Caco-2 (cell line): ENCODE measurements at regions of chr1 and their contacts with region 1.

Region 1: GRCh38 chr1:247295274-247295684 is 36.4 kb downstream of the ZNF496 start:
- DNase-seq: no peak
- H3K4me3 ChIP-seq: no peak overlapping the region
- H3K4me3 Mint-ChIP-seq: no peak overlapping the region
- H3K27ac Mint-ChIP-seq: no peak overlapping the region
- H3K4me1 ChIP-seq: no peaks in the 10 kb centered on the region
- H3K4me1 Mint-ChIP-seq: no peaks in the 10 kb centered on the region
- H3K27me3 ChIP-seq: no peaks in the 10 kb centered on the region
- H3K27me3 Mint-ChIP-seq: no peaks in the 10 kb centered on the region
- CTCF ChIP-seq: no peak

Region 2: DNA sequence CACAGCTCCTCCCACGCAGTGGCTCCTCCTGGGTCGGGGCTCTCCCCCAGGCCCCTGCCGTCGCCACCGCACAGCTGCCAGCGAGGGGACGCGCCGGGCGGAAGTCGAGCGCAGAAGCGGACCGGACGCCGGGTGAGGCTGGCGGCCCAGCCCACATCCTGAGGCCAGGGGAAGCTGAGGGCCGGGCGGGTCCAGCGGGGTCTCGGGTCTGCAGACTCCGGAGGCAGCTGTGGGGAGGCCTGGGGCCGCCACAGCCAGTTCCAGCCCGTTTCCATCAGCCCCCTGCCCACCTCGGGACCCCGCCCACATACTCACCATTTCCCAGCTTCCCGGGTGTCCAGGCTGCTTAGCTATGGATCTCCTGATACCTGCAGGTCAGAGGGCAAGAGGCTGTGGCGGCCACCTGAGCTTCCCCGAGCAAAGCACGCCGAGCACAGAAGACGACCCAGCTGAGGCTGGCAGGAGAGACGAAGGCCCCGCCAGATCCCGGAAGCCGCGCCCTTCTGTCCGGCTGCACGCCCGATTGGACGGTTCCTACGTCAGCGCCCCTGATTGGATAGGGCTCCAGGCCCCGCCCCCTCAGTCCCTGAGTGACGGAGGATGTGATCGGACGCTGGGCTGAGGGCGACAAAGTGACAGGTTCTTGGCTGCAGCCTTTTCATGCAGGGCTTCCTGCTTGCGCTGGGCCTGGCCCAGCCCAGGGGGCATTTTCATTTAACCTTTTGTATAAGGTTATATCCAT is 84.7 kb before region 1 on chr1:
- CTCF ChIA-PET with region 1: no interaction called
- POLR2A ChIA-PET with region 1: no interaction called
- intact Hi-C with region 1: loop called (anchors 5 kb)
- DNase-seq: peak; percentile 97 to 98
- H3K4me3 ChIP-seq: peak overlapping the region; percentile 82
- H3K4me3 Mint-ChIP-seq: peak overlapping the region; percentile 94
- H3K27ac Mint-ChIP-seq: peak overlapping the region; percentile 95
- H3K4me1 ChIP-seq: peaks cover 7% of the 10 kb centered on the region; the same call in 1 of the 2 replicates
- H3K4me1 Mint-ChIP-seq: peaks cover 5% of the 10 kb centered on the region
- H3K27me3 ChIP-seq: no peaks in the 10 kb centered on the region
- H3K27me3 Mint-ChIP-seq: no peaks in the 10 kb centered on the region
- CTCF ChIP-seq: no peak

Region 3: GRCh38 chr1:247241687-247242086 is 53.6 kb before region 1 on chr1:
- CTCF ChIA-PET with region 1: no interaction called
- POLR2A ChIA-PET with region 1: no interaction called
- intact Hi-C with region 1: no loop called
- DNase-seq: no peak
- H3K4me3 ChIP-seq: no peak overlapping the region
- H3K4me3 Mint-ChIP-seq: no peak overlapping the region
- H3K27ac Mint-ChIP-seq: no peak overlapping the region
- H3K4me1 ChIP-seq: no peaks in the 10 kb centered on the region
- H3K4me1 Mint-ChIP-seq: no peaks in the 10 kb centered on the region
- H3K27me3 ChIP-seq: no peaks in the 10 kb centered on the region
- H3K27me3 Mint-ChIP-seq: peaks cover 9% of the 10 kb centered on the region
- CTCF ChIP-seq: no peak

Region 4: DNA sequence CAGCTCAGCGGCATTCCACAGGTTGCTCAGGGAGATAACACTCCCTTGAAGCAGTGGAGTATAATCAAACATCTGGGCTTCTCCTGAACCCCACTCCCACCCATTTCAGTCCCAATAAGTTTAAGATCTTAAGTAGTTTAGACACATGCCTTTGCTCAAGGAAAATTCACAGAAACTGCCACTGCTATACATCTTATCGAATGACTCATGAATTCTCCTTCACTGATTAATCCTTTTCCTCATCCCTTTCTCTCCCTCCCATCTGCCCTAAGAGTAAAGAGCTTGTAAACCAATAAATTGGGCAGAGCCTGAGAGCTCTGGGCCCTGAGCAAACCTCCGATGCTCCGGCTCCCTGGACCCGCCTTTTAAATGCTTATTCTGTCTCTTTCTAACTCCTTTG is 29.2 kb before region 1 on chr1:
- CTCF ChIA-PET with region 1: no interaction called
- POLR2A ChIA-PET with region 1: no interaction called
- intact Hi-C with region 1: no loop called
- DNase-seq: no peak
- H3K4me3 ChIP-seq: no peak overlapping the region
- H3K4me3 Mint-ChIP-seq: no peak overlapping the region
- H3K27ac Mint-ChIP-seq: no peak overlapping the region
- H3K4me1 ChIP-seq: no peaks in the 10 kb centered on the region
- H3K4me1 Mint-ChIP-seq: no peaks in the 10 kb centered on the region
- H3K27me3 ChIP-seq: no peaks in the 10 kb centered on the region
- H3K27me3 Mint-ChIP-seq: no peaks in the 10 kb centered on the region
- CTCF ChIP-seq: no peak